ENCODE measurements at regions of chr9 and their contacts with region 1.

Region 1: DNA sequence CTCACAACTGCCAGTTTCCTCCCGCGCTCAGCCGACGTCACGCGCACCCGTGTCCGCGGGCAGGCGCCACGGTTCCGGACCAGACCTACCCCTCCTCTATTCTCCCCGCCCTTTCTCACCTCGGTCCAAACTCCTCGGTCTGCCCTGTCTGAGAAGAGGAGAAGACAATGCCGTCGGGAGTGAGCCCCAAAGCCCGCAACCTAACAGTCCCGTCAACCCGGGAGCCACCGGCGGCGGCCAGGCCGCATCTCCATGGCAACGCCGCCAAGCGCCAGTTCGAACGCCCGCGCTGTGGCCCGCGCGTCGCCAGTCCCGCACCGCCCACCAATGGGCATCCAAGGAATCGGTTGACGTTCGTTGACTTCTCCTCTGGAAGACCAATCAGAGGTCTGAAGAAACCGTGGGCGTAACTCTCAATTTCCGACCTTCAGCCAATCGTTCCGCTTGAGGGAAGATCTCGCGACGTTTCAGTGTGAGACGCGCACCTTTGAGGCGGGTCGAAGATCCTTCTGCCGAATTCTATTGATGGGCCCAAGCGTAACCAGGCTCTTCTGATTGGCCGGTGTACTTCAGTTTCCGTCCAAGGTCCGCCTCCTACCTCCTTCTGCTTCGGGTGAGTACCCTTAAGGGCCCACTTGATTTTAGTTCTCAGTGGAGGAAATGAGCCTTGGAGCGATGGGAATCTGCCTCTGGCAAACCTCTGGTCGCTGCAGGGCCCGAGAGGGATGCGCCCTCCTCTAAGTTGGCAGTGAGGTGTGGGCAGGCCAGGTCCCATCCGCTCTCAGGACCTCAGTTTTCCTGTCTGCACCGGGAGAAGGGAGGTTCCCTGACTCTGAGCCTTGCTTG is at the starts of genes KIF24 and NUDT2:
- DNase-seq: peak; percentile 88
- ATAC-seq: peak; percentile 91
- H3K4me3 Mint-ChIP-seq: peak within 1 kb of the TSS; percentile 92
- H3K27ac Mint-ChIP-seq: peak within 1 kb of the TSS; percentile 96
- H3K4me1 Mint-ChIP-seq: peaks cover 38% of the 10 kb centered on the region
- H3K27me3 Mint-ChIP-seq: no peaks in the 10 kb centered on the region
- CTCF ChIP-seq: no peak
- total RNA-seq, gene KIF24: 0.69 and 0.71 TPM in 2 replicates
- total RNA-seq, gene NUDT2: 19.2 and 19.7 TPM in 2 replicates

Region 2: DNA sequence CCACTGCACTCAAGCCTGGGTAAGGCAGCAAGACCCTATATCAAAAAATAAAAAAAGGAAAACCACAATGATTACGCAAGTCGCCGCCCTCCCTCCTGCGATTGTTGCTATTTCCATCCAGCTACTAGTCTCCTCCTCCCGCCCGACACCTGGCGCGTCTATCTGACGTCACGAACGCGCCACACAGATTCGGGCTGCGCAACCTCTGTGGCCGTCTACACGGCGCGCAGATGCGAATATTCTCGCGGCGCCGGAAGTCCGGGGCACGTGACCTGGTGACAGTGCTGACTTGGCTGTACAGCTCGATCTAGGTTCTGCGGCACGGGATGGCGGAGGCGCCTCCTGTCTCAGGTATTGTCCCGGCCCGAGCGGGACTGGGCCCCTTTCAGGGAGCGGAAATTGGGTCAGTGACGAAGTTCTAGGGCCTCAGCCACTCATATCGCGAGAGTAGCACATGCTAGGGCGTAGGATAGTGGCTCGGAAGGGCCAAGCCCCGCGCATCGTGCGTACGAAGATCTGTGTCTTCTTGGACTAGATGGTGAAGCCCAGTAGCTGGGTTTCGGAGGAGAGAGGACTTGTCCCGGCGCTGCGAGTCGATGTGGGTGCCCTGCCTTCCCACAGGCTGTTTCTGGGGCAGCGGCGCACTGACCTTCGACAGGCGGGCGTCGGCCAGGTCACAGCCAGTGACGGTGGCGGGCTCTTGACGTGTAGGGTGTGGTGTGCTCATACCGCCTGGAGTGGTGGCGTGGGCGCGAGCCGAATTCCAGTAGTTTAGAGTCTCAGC is 1038.8 kb before region 1 on chr9 and contains the start of gene NFX1:
- CTCF ChIA-PET with region 1: no interaction called
- POLR2A ChIA-PET with region 1: no interaction called
- intact Hi-C with region 1: loop called (anchors 2 kb)
- DNase-seq: peak; percentile 97
- ATAC-seq: peak; percentile 80
- H3K4me3 Mint-ChIP-seq: peak within 1 kb of the TSS; percentile 99
- H3K27ac Mint-ChIP-seq: peak within 1 kb of the TSS; percentile 100
- H3K4me1 Mint-ChIP-seq: peaks cover 62% of the 10 kb centered on the region
- H3K27me3 Mint-ChIP-seq: no peaks in the 10 kb centered on the region
- CTCF ChIP-seq: no peak
- total RNA-seq, gene NFX1: 51.0 and 57.2 TPM in 2 replicates

Region 3: GRCh38 chr9:34126207-34127034 is 202.8 kb before region 1 on chr9 and contains the start of gene DCAF12:
- CTCF ChIA-PET with region 1: no interaction called
- POLR2A ChIA-PET with region 1: no interaction called
- intact Hi-C with region 1: loop called (anchors 5 kb)
- DNase-seq: peak; percentile 71
- ATAC-seq: peak; percentile 81
- H3K4me3 Mint-ChIP-seq: peak within 1 kb of the TSS; percentile 90
- H3K27ac Mint-ChIP-seq: peak within 1 kb of the TSS; percentile 72
- H3K4me1 Mint-ChIP-seq: peaks cover 52% of the 10 kb centered on the region
- H3K27me3 Mint-ChIP-seq: peaks cover 39% of the 10 kb centered on the region
- CTCF ChIP-seq: no peak
- total RNA-seq, gene DCAF12: 3.8 and 5.9 TPM in 2 replicates

Region 4: DNA sequence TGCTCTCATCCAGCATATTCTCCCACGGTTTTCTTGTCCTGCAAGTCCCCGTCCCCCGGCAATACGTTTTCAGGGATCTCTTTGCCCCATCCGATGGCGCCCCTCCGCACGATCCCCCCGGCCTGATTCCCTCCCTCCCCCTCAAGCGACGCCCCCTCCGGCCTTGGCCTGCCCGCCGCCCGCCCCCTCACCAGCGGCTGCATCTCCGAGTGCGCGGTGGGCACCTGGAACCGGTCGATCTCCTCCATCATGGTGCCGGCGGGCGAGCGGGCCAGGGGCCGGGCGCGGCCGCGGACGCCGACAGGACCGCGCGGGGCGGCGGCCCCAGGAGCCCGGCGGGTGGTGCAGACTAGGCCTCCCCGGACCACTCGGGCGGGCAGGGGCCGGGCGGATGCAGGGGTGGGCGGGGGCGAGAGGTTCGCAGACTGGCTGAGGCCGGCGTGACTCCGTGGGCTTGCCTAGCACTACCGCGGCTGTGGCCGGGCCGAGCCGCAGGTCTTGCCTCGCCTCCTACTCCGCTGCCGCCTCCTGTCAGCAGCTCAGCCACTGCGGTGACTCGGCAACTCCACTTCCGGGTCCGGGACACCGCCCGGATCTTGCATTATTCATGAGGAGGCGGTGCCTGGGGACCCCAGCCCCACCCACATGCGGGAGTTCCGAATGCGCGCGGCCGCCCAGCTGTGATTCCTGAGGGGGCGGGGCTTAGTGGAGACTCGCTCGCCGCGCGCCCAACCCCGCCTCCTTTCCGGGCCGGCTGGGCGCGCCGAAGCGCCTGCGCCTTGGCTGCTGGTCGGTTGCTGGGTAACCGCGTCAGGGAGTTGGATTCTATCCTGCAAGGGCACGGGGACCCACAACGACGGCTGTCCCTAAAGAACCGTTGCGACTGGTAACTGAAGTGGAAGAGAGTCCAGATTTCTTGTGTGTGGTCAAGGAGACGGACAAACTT is 129.1 kb after region 1 on chr9 and contains the starts of genes DNAI1 and FAM219A:
- CTCF ChIA-PET with region 1: interaction called, 3 read pairs
- POLR2A ChIA-PET with region 1: no interaction called
- intact Hi-C with region 1: loop called (anchors 1 kb)
- DNase-seq: peak; percentile 99
- ATAC-seq: peak; percentile 92
- H3K4me3 Mint-ChIP-seq: peak within 1 kb of the TSS; percentile 90
- H3K27ac Mint-ChIP-seq: peak within 1 kb of the TSS; percentile 68
- H3K4me1 Mint-ChIP-seq: peaks cover 34% of the 10 kb centered on the region
- H3K27me3 Mint-ChIP-seq: peaks cover 12% of the 10 kb centered on the region
- CTCF ChIP-seq: no peak
- total RNA-seq, gene DNAI1: not detected in 2 replicates
- total RNA-seq, gene FAM219A: 13.5 and 16.9 TPM in 2 replicates

Region 5: DNA sequence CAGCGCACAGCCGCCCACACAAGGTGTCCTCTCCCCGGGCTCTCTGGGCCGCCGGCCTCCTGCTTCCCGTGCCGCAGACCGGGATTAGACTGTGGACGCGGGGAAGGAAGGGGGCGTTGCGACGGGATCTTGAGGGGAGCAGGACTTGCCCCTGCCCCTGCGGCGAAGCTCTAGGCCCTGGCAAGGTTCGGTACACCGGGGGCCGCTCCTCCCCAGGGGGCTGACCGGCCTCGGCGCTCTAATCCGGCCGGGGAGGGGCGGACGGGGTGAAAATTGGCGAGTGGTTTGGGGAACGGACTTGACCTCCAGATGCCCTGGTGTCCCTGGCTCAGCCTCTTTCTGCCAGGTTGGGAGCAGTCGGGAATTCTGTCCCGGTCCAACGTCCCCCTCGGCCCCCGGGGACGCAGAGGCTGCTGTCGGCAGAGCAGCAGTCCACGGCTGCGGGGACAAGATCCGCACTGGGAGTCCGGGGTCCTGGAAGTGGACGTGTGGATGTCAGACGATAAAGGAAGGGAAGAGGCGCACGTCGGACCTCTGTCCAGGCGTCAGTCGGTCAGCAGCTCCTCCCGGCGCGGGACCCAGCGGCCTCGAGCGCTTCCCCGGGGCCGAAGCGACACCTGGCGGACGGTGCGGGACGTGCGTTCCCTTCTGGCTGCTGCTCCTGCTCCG is 262.2 kb after region 1 on chr9:
- CTCF ChIA-PET with region 1: interaction called, 3 read pairs
- POLR2A ChIA-PET with region 1: no interaction called
- intact Hi-C with region 1: loop called (anchors 2 kb)
- DNase-seq: peak; percentile 82
- ATAC-seq: peak; percentile 90
- H3K4me3 Mint-ChIP-seq: peak overlapping the region; percentile 77
- H3K27ac Mint-ChIP-seq: no peak overlapping the region
- H3K4me1 Mint-ChIP-seq: peaks cover 41% of the 10 kb centered on the region
- H3K27me3 Mint-ChIP-seq: peaks cover 77% of the 10 kb centered on the region
- CTCF ChIP-seq: peak; percentile 21

Region 6: GRCh38 chr9:34637356-34638137 is 308.3 kb after region 1 on chr9 and contains the start of gene SIGMAR1:
- CTCF ChIA-PET with region 1: interaction called, 3 read pairs
- POLR2A ChIA-PET with region 1: no interaction called
- intact Hi-C with region 1: loop called (anchors 5 kb)
- DNase-seq: peak; percentile 93
- ATAC-seq: peak; percentile 95
- H3K4me3 Mint-ChIP-seq: peak within 1 kb of the TSS; percentile 87
- H3K27ac Mint-ChIP-seq: peak within 1 kb of the TSS; percentile 78
- H3K4me1 Mint-ChIP-seq: peaks cover 29% of the 10 kb centered on the region
- H3K27me3 Mint-ChIP-seq: no peaks in the 10 kb centered on the region
- CTCF ChIP-seq: no peak
- total RNA-seq, gene SIGMAR1: 27.2 TPM in 2 replicates

Measured in activated B cell treated with CpG ODN at 0.5 μM for 24 hours (primary cell).